OCI-LY7 (cell line): ENCODE measurements at regions of chr2 and their contacts with region 1.

Region 1: GRCh38 chr2:210195101-210195852 is 24.1 kb upstream of the KANSL1L start:
- DNase-seq: peak; percentile 68
- H3K4me3 ChIP-seq: no peak overlapping the region
- H3K27ac ChIP-seq: no peak overlapping the region
- H3K4me1 ChIP-seq: no peaks in the 10 kb centered on the region
- CTCF ChIP-seq: peak; percentile 96

Region 2: DNA sequence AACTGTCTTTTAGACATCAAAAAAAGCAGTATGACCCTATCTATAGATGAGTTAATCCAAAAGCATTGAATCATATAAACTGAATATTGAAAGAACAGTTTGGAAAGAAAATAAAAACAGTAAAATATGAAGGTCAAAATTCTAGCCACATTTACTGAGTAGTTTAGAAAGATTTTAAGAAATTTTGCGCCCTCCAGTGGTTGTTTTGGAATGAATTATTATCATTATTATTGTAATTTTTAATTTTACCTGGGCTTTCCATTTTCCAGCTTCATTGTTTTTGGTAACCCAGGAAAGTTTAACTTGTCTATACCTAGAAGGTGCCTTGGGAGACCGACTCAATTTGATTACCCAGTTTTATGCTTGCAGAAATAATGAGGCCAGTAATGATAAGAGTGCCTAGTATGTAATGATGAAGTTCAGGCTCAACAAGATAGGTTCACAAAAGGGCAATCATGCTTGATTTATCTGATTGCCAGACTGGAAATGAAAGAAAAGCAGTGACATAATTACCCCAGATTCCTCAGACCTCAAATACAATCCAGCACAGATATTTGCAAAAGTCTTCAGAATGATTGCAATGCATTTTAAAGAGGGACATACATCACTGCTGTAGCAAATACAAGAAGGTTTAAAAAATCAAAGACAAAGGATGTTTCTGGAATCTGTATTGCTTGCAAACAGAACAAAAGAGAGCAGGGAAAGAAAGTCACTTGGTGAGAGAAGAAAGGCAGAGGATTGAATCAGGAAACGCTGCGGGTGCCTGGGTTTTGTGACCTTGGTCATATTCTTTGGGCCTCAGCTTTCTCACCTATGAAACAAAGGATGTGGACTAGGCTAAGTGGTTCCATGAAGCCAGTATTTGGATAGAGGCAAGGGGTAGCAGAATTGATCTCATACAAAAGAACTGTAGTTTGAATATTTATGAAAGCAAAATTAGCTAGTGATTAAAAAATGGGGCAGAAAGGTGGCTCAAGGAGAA is 617.6 kb before region 1 on chr2:
- CTCF ChIA-PET with region 1: no interaction called
- POLR2A ChIA-PET with region 1: no interaction called
- intact Hi-C with region 1: loop called (anchors 5 kb)
- DNase-seq: peak; percentile 23
- H3K4me3 ChIP-seq: no peak overlapping the region
- H3K27ac ChIP-seq: no peak overlapping the region
- H3K4me1 ChIP-seq: no peaks in the 10 kb centered on the region
- CTCF ChIP-seq: peak; percentile 80

Region 3: DNA sequence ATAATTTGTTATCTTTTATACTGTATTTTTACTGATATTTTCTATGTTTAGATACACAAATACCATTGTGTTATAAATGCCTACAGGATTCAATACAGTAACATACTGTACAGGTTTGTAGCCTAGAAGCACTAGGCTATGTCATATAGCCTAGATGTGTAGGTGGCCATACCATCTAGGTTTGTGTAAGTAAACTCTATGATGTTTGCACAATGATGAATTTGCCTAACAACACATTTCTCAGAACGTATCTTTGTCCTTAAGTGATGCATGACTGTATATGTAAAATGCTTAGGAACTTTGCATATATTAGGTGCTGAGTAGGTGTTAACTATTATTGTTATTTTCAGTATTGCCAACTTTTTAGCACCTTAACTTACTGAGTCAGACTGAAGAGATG is 406.3 kb before region 1 on chr2:
- CTCF ChIA-PET with region 1: no interaction called
- POLR2A ChIA-PET with region 1: no interaction called
- intact Hi-C with region 1: loop called (anchors 10 kb)
- DNase-seq: no peak
- H3K4me3 ChIP-seq: no peak overlapping the region
- H3K27ac ChIP-seq: no peak overlapping the region
- H3K4me1 ChIP-seq: no peaks in the 10 kb centered on the region
- CTCF ChIP-seq: no peak

Region 4: DNA sequence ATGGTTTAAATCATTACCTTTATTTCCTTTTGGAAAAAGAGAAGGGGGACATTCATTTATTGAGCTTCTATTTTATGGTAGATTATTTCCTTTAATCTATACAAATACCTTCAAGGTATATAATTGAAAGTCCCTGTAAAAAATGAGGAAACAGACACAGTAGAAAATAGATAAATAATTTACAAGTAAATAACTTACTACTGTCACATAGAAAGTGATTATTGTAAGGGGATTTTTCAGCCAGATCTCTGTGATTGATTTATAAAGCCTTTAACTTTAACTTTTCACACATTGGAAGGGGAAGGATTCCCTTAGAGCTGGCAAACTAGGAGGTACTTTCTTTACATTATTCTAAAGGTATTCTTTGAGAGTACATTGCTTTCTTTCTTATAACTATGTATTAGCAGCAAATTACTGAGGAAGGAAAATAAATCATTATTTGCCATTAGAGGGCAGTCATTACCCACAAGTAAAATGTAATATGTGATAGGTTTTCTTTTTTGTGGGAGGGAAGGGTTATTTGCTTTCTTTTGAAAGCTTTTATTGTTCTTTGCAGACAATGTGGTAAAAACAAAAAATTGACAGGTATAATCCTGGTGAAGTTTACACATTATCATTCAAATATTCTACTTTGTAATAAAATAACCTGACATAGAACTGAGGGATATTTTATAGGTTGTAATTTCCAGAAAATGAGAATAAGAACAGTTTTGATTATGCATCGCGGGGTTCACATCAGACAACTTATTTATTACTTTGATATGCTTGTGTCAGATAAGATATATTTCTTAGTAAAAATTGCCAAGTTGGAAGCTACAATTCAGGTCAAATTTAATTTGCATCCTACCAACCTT is 217.7 kb before region 1 on chr2:
- CTCF ChIA-PET with region 1: no interaction called
- POLR2A ChIA-PET with region 1: no interaction called
- intact Hi-C with region 1: loop called (anchors 1 kb)
- DNase-seq: peak; percentile 50
- H3K4me3 ChIP-seq: no peak overlapping the region
- H3K27ac ChIP-seq: no peak overlapping the region
- H3K4me1 ChIP-seq: no peaks in the 10 kb centered on the region
- CTCF ChIP-seq: peak; percentile 82

Region 5: DNA sequence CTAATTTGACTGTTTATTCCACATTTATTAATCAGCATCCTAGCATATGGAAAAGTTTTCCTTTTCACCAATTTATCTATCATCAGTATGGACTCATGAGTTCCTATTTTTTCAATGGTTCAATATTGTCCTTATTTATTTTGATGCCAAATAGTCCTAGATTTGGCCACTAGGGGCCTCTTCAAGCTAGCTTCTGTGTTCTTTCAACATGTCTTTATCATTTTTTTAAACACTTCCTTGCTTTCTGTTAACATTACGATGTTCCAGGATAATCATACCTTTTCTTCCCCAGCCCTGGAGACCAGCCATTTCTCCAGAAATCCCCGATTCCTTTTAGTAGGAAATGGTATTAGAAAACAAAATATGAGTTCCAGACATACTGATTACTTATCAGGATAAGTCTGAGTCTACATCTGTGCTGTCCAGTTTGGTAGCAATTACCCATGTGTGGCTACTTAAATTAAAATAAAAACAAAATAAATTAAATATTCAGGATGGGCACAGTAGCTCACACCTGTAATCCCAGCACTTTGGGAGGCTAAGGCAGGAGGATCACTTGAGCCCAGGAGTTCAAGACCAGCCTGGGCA is 122.3 kb before region 1 on chr2:
- CTCF ChIA-PET with region 1: no interaction called
- POLR2A ChIA-PET with region 1: interaction called, 3 read pairs
- intact Hi-C with region 1: loop called (anchors 1 kb)
- DNase-seq: peak; percentile 58
- H3K4me3 ChIP-seq: no peak overlapping the region
- H3K27ac ChIP-seq: no peak overlapping the region
- H3K4me1 ChIP-seq: no peaks in the 10 kb centered on the region
- CTCF ChIP-seq: peak; percentile 90

Region 6: GRCh38 chr2:210833403-210833802 is 638.1 kb after region 1 on chr2:
- CTCF ChIA-PET with region 1: no interaction called
- POLR2A ChIA-PET with region 1: no interaction called
- intact Hi-C with region 1: no loop called
- DNase-seq: no peak
- H3K4me3 ChIP-seq: no peak overlapping the region
- H3K27ac ChIP-seq: no peak overlapping the region
- H3K4me1 ChIP-seq: no peaks in the 10 kb centered on the region
- CTCF ChIP-seq: no peak